HEK293 (cell line): ENCODE measurements at regions of chr16 and their contacts with region 1.

Region 1: DNA sequence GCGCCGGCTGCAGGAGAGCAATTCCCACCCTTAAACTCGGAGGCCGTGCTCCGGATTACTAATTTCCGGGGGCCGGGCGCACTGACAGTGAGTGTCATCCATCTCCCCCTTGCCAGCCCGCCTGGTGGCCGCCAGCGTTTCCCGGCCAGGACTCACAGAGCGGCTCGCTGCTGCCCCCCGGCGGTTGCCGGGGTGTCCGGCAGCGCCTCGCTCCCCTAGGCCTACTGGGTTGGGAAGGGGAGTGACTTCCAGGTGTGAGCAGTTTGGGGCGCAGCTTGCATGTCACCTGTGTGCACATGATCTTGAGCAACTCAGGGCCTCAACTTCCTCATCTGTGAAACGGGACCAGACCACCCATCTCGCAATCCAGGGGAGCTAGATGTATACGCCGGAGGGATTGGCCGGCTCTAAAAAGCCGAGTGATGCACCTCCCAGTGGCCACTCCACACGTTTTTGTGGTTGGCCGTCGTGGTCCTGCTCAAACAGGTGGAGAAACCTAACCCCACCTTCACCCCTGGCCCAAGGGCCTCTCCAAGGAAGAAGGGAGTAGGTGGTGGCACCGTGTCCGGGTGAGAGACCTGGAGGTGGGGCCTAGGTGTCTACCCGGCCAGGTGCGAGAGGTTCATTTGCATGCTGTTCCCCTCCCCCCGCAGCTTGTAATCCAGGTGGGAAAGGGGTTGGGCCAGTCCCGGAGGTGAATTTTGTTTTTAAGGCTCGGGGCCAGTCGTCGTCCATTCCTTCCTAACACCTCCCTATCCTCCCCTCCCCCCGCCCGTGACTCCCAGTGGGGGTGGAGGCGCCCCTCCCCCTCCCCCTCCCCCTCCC is 2.4 kb upstream of the GSE1 start:
- H3K4me3 ChIP-seq: peak overlapping the region; percentile 48; the same call in 1 of the 2 replicates
- H3K27ac ChIP-seq: peak overlapping the region; percentile 99; the same call in 1 of the 2 replicates
- H3K4me1 ChIP-seq: peaks cover 2% of the 10 kb centered on the region; the same call in 1 of the 2 replicates
- CTCF ChIP-seq: peak; percentile 94

Region 2: DNA sequence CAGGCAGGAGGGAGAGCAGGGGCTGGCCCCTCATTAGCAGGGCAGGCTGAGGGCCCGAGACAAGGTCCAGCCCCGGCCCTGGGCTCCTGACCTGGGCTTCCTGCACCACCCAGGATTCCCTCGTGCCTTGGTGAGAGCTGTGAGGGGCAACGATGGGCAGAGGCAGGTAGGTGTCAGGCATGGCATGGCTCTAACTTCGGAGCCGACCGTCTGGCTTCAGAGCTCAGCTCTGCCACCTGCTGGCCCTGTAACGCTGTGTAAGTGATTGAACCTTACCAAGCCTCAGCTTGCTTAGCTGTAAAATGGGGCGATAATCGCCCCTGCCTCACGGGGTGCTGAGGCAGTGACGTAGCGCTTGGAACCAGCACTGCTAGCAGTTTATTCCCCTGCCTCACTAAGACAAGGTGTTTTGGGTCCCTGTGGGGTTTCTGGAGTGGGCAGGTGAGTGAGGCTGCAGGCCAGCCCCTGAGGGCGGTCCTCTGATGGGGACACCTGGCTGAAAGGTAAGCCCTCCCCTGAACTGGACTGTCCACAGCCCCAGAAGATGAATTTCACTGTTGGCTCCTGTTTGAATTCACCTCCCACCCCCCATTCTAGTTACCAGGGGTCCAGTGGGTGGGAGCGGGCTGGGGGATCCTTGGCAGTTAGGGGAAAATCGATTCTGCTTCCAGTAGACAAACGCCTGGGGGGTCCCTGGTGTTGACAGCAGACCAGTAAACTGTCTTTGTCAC is 182.4 kb before region 1 on chr16:
- CTCF ChIA-PET with region 1: interaction called, 11 read pairs
- POLR2A ChIA-PET with region 1: no interaction called
- H3K4me3 ChIP-seq: no peak overlapping the region
- H3K27ac ChIP-seq: no peak overlapping the region
- H3K4me1 ChIP-seq: no peaks in the 10 kb centered on the region
- CTCF ChIP-seq: peak; percentile 67

Region 3: DNA sequence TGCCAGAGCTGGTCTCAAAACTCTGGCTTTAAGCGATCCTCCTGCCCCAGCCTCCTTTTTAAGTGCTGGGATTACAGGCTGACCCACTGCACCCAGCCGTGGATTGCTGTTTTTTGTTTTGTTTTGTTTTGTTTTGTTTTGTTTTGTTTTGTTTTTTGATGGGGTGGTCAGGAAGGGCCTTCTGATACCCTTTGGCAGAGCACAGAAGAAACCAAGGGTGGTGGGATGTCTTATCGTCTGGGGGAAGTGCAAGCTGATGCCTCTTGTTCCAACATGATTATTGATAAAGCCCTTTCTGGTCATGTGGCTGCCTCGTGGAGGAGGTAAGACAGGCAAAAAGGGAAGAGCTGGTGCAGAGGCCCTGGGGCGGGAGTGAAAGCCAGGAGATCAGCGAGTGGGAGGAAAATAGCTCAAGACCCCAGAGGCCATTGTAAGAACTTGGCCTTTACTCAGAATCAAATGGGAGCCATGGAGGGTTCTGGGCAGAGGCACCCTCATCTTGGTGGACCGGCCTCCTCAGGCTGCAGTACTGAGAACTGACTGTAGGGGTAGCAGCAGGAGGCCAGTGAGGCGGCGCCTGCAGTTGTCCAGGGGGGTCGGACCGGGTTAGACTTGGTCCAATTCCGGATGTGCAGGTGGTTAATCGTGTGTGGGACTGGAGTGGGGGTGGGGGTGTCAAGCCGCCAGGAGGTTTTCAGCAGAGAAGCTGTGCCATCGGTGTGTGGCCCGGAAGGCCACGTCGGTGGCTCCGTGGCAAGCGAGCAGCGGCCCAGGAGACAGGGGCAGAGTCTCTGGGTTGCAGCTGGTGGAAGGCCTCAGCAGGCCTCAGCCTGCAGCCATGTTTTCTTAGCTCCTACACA is 82.0 kb before region 1 on chr16:
- CTCF ChIA-PET with region 1: interaction called, 10 read pairs
- POLR2A ChIA-PET with region 1: no interaction called
- H3K4me3 ChIP-seq: no peak overlapping the region
- H3K27ac ChIP-seq: no peak overlapping the region
- H3K4me1 ChIP-seq: peaks cover 14% of the 10 kb centered on the region
- CTCF ChIP-seq: no peak

Region 4: GRCh38 chr16:85554112-85554813 is 56.5 kb before region 1 on chr16:
- CTCF ChIA-PET with region 1: interaction called, 16 read pairs
- POLR2A ChIA-PET with region 1: interaction called, 37 read pairs
- H3K4me3 ChIP-seq: peak overlapping the region; percentile 69
- H3K27ac ChIP-seq: peak overlapping the region; percentile 91
- H3K4me1 ChIP-seq: peaks cover 5% of the 10 kb centered on the region
- CTCF ChIP-seq: no peak

Region 5: GRCh38 chr16:85564277-85565051 is 46.3 kb before region 1 on chr16:
- CTCF ChIA-PET with region 1: interaction called, 12 read pairs
- POLR2A ChIA-PET with region 1: no interaction called
- H3K4me3 ChIP-seq: no peak overlapping the region
- H3K27ac ChIP-seq: no peak overlapping the region
- H3K4me1 ChIP-seq: peaks cover 21% of the 10 kb centered on the region
- CTCF ChIP-seq: peak; percentile 83

Region 6: DNA sequence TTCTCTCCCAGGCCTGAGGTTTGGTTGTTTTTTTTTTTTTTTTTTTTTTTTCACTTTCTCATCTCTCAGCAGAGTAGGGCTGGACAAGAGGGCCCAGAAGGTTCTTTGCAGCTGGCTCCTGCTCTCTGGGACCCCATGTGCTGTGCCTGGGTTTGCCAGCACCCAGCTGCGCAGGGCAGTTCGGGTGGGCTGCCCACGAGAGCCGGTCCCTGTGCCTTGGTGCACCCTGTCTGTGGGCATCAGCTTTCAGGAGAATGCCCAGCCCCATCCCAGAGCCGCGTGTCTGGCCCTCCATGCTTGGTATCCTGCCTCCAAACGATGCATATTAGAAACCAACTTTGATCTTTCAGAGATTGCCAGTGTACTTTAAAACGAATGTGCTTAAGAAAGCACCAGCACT is 12.6 kb before region 1 on chr16:
- CTCF ChIA-PET with region 1: interaction called, 10 read pairs
- POLR2A ChIA-PET with region 1: no interaction called
- H3K4me3 ChIP-seq: no peak overlapping the region
- H3K27ac ChIP-seq: no peak overlapping the region
- H3K4me1 ChIP-seq: no peaks in the 10 kb centered on the region
- CTCF ChIP-seq: no peak